PC-9 (cell line): ENCODE measurements at regions of chr2 and their contacts with region 1.

Region 1: DNA sequence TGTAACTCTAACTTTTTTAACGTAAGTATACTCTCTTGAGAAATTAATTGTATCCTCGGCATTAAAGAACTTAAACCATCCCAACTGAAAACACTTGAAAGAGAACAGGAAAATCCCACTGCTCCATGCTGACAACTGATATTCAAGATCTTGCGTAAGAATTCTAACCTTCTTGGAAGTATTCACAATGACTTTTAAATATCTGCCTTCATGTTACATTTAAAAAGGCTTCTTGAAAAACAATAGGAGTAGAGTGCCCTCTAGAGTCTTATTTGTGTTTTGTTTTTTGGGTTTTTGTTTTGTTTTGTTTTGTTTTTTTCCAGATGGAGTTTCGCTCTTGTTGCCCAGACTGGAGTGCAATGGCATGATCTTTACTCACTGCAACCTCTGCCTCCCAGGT is 65.4 kb upstream of the DNAJC10 start:
- DNase-seq: peak in 1 of 2 experiments; percentile 74
- H3K4me3 ChIP-seq: no peak overlapping the region
- H3K27ac ChIP-seq: no peak overlapping the region
- H3K4me1 ChIP-seq: no peaks in the 10 kb centered on the region
- H3K27me3 ChIP-seq: no peaks in the 10 kb centered on the region
- CTCF ChIP-seq: peak; percentile 85

Region 2: DNA sequence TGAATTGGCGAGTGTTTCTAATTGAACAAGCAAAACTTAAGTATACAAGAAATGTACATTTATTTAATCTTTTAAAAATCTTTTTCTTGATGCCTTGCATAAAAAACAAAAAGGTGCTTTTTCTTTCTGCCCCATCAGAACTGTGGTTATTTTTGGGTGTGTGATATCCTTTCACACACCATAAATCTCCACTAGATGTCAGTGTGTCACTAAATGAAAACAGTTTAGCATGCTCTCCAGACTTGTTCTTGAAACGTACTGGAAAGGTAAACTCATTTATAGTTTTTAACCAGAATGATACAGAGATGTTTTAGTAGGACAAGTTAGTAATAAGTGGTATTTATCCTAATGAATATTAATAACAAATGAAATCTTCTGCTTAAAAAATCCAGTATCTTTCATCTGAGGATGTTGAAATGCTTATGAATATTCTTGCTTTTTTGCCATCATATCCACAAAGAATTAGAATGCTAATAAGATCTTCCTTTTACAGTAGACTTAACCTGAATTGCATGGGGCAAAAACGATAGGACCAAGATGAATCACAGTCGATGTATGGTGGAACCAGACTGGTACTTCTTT is 1573.5 kb before region 1 on chr2:
- CTCF ChIA-PET with region 1: interaction called, 3 read pairs
- POLR2A ChIA-PET with region 1: no interaction called
- intact Hi-C with region 1: loop called (anchors 10 kb)
- DNase-seq: peak in 1 of 2 experiments; percentile 63
- H3K4me3 ChIP-seq: no peak overlapping the region
- H3K27ac ChIP-seq: no peak overlapping the region
- H3K4me1 ChIP-seq: no peaks in the 10 kb centered on the region
- H3K27me3 ChIP-seq: no peaks in the 10 kb centered on the region
- CTCF ChIP-seq: peak; percentile 95

Region 3: DNA sequence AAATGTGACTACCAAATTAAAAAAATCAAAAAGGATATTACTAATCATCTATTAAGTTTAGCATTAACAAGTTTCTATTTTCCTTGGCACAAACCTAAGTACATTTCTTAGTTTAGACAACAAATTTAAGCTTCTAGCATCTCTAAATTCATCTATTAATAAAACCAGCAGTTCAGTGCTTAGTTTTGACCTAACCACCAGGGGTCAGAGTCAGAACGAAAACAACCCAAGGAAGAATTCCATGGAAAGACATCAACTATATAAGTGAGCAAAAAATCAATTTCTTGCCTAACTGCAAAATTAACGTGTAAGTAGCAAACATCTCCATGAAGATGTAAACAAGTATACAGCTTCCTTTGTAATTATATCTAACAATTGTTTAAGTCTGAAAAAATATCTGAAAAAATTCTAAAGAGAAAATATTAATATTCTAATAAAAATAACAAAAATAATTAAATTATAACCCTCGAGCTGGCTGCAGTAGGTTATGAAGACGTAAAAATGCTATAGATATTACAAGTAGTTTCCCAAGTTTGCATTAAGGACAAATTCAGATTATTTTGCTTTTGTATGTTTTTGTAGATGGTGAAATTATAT is 1077.5 kb before region 1 on chr2:
- CTCF ChIA-PET with region 1: no interaction called
- POLR2A ChIA-PET with region 1: interaction called, 3 read pairs
- intact Hi-C with region 1: loop called (anchors 1 kb)
- DNase-seq: peak; percentile 19 to 49
- H3K4me3 ChIP-seq: no peak overlapping the region
- H3K27ac ChIP-seq: no peak overlapping the region
- H3K4me1 ChIP-seq: no peaks in the 10 kb centered on the region
- H3K27me3 ChIP-seq: no peaks in the 10 kb centered on the region
- CTCF ChIP-seq: peak; percentile 86

Region 4: DNA sequence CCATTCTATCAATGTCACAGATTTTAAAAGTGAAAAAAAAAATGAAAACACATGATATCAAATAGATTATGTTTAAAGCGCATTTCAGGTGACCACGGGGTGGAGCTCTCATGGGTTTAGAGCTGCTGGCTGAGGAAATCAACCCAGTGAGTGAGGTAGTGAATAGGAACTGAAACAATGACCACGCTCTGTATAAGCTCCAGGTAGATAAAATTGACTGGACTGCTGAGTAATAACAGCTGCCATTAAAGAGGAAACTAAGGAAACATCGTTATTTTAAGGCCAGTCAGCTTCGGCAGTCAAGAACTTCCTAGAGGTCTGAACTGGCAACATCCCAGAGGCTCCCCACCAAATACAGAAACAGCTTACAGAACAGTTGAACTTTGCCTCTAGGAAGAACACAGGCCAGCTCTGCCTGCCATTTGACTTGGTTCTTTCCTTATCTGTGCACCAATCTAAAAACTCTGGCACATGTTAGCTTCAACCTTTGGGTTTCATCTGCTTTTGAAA is 409.8 kb before region 1 on chr2:
- CTCF ChIA-PET with region 1: interaction called, 6 read pairs
- POLR2A ChIA-PET with region 1: no interaction called
- intact Hi-C with region 1: loop called (anchors 2 kb)
- DNase-seq: peak in 1 of 2 experiments; percentile 7
- H3K4me3 ChIP-seq: no peak overlapping the region
- H3K27ac ChIP-seq: no peak overlapping the region
- H3K4me1 ChIP-seq: no peaks in the 10 kb centered on the region
- H3K27me3 ChIP-seq: no peaks in the 10 kb centered on the region
- CTCF ChIP-seq: peak; percentile 63

Region 5: GRCh38 chr2:182577816-182578215 is 72.9 kb before region 1 on chr2:
- CTCF ChIA-PET with region 1: no interaction called
- POLR2A ChIA-PET with region 1: no interaction called
- intact Hi-C with region 1: no loop called
- DNase-seq: no peak
- H3K4me3 ChIP-seq: no peak overlapping the region
- H3K27ac ChIP-seq: no peak overlapping the region
- H3K4me1 ChIP-seq: no peaks in the 10 kb centered on the region
- H3K27me3 ChIP-seq: no peaks in the 10 kb centered on the region
- CTCF ChIP-seq: no peak

Region 6: GRCh38 chr2:183105402-183106134 is 454.9 kb after region 1 on chr2:
- CTCF ChIA-PET with region 1: interaction called, 16 read pairs
- POLR2A ChIA-PET with region 1: no interaction called
- intact Hi-C with region 1: no loop called
- DNase-seq: no peak
- H3K4me3 ChIP-seq: no peak overlapping the region
- H3K27ac ChIP-seq: no peak overlapping the region
- H3K4me1 ChIP-seq: 0 out of 2 replicates have a peak, but pooled peaks cover 5% of the 10 kb centered on the region
- H3K27me3 ChIP-seq: no peaks in the 10 kb centered on the region
- CTCF ChIP-seq: no peak